ENCODE measurements at regions of chr9 and their contacts with region 1.

Region 1: GRCh38 chr9:136245219-136246150 is at the start of gene QSOX2:
- DNase-seq: peak; percentile 78 to 89 (median 84)
- H3K4me3 ChIP-seq: peak within 1 kb of the TSS; percentile 50 to 57
- H3K4me3 Mint-ChIP-seq: peak within 1 kb of the TSS; percentile 91 to 97 (median 94)
- H3K27ac ChIP-seq: peak within 1 kb of the TSS; percentile 32
- H3K27ac Mint-ChIP-seq: peak within 1 kb of the TSS; percentile 85 to 94 (median 92)
- H3K4me1 ChIP-seq: peaks cover 35% of the 10 kb centered on the region
- H3K4me1 Mint-ChIP-seq: peaks cover 25 to 40% (median 32%) of the 10 kb centered on the region in 4 donors
- H3K27me3 ChIP-seq: no peaks in the 10 kb centered on the region
- H3K27me3 Mint-ChIP-seq: no peaks in the 10 kb centered on the region
- total RNA-seq, gene QSOX2: 14.8 to 15.0 TPM

Region 2: DNA sequence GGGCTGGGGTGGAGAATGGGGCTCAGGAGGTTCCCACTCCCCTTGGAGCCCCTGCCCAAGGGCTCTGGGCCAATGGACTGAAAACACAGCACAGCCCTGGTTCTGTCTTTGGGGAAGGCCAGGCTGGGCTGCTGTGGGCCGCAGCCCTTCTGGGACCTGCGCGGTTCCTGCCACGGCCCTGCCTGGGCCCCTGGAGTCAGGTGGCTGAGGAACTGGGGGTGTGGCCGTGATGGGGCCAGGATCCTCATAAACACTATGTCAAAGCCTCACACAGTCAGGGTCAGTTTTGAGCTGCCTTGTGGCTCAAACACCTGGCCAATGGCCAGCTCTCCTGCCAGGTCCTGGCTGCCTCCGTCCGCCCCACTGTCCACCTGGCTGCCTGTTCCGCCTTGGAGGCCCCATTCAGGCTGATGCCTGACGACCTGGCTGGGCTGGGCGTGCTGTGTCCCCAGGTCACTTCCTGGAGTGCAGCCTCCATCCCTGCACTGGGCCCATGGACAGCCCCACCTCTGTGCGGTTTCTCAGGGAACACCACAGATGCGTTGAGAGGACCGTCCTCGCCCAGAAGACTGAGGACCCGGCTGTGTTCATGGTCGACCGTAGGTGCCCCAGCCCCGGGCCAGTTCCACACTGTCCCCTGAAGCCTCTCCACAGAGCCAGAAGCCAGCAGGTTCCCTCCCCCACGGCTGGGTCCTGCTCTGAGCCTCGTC is 656.4 kb before region 1 on chr9:
- CTCF ChIA-PET with region 1: no interaction called
- POLR2A ChIA-PET with region 1: no interaction called
- intact Hi-C with region 1: no loop called
- DNase-seq: no peak
- H3K4me3 ChIP-seq: no peak overlapping the region
- H3K4me3 Mint-ChIP-seq: no peak overlapping the region
- H3K27ac ChIP-seq: no peak overlapping the region
- H3K27ac Mint-ChIP-seq: no peak overlapping the region
- H3K4me1 ChIP-seq: no peaks in the 10 kb centered on the region
- H3K4me1 Mint-ChIP-seq: no peaks in the 10 kb centered on the region
- H3K27me3 ChIP-seq: no peaks in the 10 kb centered on the region
- H3K27me3 Mint-ChIP-seq: peaks cover 4 to 17% of the 10 kb centered on the region in 2 donors

Region 3: DNA sequence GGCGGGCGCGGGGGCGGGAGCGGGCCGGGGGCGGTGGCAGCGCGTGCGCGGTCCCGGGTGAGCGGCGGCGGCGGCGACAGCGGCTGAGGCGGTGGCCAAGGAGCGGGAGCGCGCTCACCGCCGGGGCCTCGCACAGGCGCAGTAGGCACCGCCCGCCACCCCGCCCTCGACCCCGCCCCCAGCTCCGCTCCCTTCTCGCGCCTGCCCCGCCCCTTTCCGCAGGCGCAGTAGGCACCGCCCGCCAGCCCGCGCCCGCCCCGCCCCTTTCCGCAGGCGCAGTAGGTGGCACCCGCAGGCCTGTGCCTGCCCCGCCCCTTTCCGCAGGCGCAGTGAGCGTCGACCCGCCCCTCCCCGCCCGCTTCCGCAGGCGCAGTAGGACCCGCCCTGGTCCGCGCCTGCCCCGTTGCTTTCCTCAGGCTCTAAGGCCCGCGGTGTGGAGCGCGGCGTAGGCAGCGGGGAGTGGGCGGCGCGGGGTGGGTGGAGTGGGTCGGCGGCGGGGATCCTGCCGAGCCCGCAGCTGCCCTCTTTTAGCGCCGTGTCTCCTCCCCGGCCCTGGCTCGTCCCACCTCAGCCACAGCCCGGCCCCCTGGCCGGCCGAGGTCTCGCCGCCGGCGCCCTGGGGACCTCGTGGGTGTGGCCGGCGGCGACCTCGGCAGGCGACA is 337.9 kb before region 1 on chr9 and contains the start of gene CAMSAP1:
- CTCF ChIA-PET with region 1: no interaction called
- POLR2A ChIA-PET with region 1: no interaction called
- intact Hi-C with region 1: loop called (anchors 5 kb)
- DNase-seq: peak; percentile 92 to 95 (median 93)
- H3K4me3 ChIP-seq: peak within 1 kb of the TSS; percentile 33 to 69
- H3K4me3 Mint-ChIP-seq: peak within 1 kb of the TSS; percentile 86 to 94 (median 91)
- H3K27ac ChIP-seq: peak within 1 kb of the TSS; percentile 66
- H3K27ac Mint-ChIP-seq: peak within 1 kb of the TSS; percentile 67 to 95 (median 91)
- H3K4me1 ChIP-seq: peaks cover 44% of the 10 kb centered on the region
- H3K4me1 Mint-ChIP-seq: peaks cover 37 to 67% (median 53%) of the 10 kb centered on the region in 4 donors
- H3K27me3 ChIP-seq: no peaks in the 10 kb centered on the region
- H3K27me3 Mint-ChIP-seq: no peaks in the 10 kb centered on the region
- total RNA-seq, gene CAMSAP1: 40.6 to 51.7 TPM

Region 4: GRCh38 chr9:135961277-135961705 is 284.2 kb before region 1 on chr9 and contains the start of gene UBAC1:
- CTCF ChIA-PET with region 1: no interaction called
- POLR2A ChIA-PET with region 1: no interaction called
- intact Hi-C with region 1: loop called (anchors 1 kb)
- DNase-seq: peak; percentile 92 to 96 (median 95)
- H3K4me3 ChIP-seq: peak within 1 kb of the TSS; percentile 64 to 69
- H3K4me3 Mint-ChIP-seq: peak within 1 kb of the TSS; percentile 83 to 91 (median 86)
- H3K27ac ChIP-seq: peak within 1 kb of the TSS; percentile 65
- H3K27ac Mint-ChIP-seq: peak within 1 kb of the TSS; percentile 82 to 93 (median 92)
- H3K4me1 ChIP-seq: peaks cover 21% of the 10 kb centered on the region
- H3K4me1 Mint-ChIP-seq: peaks cover 10 to 42% (median 21%) of the 10 kb centered on the region in 4 donors
- H3K27me3 ChIP-seq: no peaks in the 10 kb centered on the region
- H3K27me3 Mint-ChIP-seq: peaks cover 2 to 4% of the 10 kb centered on the region in 2 donors
- total RNA-seq, gene UBAC1: 28.4 to 32.8 TPM

Region 5: DNA sequence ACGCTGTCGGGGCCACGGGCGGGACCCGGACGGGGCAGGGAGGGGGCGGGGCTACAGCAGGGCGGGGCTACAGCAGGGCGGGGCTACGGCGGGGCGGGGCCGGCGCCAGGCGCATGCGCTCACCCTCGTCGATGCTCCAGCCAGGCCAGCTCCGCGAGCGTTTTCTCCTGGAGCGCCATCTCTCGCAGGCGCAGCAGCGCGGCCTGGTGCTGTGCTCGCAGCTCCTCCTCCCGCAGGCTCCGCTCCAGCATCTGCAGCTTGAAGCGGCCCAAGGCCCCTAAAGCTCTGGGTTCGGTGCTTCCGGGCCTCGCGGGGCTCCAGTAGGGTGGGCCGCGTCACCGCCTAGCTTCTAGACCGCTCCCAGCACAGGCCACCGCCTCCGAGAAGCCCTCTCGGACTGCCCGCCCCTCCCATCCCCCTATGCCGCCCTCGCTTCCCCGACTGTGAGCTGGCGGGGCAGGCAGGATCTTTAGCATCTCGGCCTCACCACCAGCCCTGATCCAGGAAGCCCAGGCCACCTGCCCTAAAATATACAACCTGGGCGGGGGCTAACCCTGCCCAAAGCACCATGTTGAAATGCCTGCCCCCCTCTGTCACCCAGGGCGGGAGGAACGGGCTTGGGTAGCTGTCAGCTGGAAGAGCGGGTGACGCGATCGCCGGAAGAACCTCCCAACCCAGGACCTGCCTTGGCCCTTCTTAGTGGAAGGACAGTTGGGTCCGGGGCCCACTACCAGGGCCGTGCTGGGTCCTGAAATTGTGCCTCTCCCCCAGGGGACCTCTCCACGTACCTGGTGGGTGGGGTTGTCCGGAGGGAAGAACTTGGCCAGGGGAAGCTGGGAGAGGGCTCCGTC is 22.0 kb after region 1 on chr9:
- CTCF ChIA-PET with region 1: no interaction called
- POLR2A ChIA-PET with region 1: interaction called, 10 read pairs
- intact Hi-C with region 1: loop called (anchors 1 kb)
- DNase-seq: peak; percentile 81 to 86 (median 83)
- H3K4me3 ChIP-seq: peak overlapping the region; percentile 47 to 70
- H3K4me3 Mint-ChIP-seq: peak overlapping the region; percentile 67 to 90 (median 84)
- H3K27ac ChIP-seq: peak overlapping the region; percentile 49
- H3K27ac Mint-ChIP-seq: peak overlapping the region; percentile 35 to 92 (median 81)
- H3K4me1 ChIP-seq: peaks cover 7% of the 10 kb centered on the region
- H3K4me1 Mint-ChIP-seq: peaks cover 2 to 12% (median 4%) of the 10 kb centered on the region in 4 donors
- H3K27me3 ChIP-seq: no peaks in the 10 kb centered on the region
- H3K27me3 Mint-ChIP-seq: peaks cover 0 to 6% of the 10 kb centered on the region in 2 donors

Measured in CD4-positive, alpha-beta memory T cell (primary cell).